ENCODE measurements at regions of chr17 and their contacts with region 1.

Region 1: GRCh38 chr17:40854159-40854814 is 12.7 kb downstream of the KRT12 start:
- DNase-seq: peak; percentile 71 to 84
- ATAC-seq: peak; percentile 84 to 92
- H3K4me3 ChIP-seq: no peak overlapping the region
- H3K27ac ChIP-seq: peak overlapping the region; percentile 42 to 68
- H3K4me1 ChIP-seq: peaks cover 71% of the 10 kb centered on the region
- CTCF ChIP-seq: no peak
- EP300 ChIP-seq: peak; percentile 80; a peak in 3 of 5 replicates
- POLR2A ChIP-seq: no peak
- RAD21 ChIP-seq: peak in 1 of 2 experiments; percentile 42; a peak in 1 of 5 replicates

Region 2: DNA sequence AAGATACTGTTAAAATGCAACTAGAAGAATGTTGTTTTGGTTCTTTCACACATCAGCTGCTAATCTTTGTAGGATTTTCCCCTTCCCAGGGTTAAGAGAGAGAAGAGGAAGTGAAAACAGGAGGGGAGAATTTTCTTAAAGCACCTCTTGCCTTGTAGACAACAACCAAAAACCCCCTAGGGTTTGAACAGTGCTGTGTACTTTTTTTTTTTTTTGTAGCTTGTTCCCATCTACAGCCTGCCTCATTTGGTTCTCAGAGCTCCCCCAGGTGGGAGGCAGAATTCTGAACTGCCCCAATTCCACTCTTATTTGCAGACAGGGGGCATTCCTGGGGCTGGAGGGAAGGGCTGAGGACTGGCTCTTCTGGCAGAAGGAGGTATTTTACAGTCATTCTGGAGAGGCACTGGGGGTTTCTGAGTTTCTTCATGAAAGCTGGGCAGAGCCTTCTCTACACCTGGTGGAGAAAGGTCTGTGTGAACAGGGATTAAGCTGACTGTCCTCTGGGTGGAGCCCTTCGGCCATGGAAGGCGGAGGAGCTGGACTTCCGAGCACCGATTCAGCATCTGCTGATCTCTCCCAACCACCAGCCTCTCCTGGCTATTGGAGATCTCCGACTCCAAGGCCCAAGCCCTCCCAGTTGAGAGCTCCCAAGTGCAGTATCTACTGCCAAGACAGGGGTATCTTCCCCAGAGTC is 238.8 kb before region 1 on chr17:
- CTCF ChIA-PET with region 1: interaction called, 20 read pairs
- POLR2A ChIA-PET with region 1: no interaction called
- DNase-seq: peak; percentile 84 to 91
- ATAC-seq: peak; percentile 84 to 93
- H3K4me3 ChIP-seq: no peak overlapping the region
- H3K27ac ChIP-seq: peak overlapping the region in 1 of 2 experiments; percentile 45; a peak in 2 of 6 replicates
- H3K4me1 ChIP-seq: peaks cover 12% of the 10 kb centered on the region
- CTCF ChIP-seq: peak; percentile 93
- EP300 ChIP-seq: no peak
- POLR2A ChIP-seq: no peak
- RAD21 ChIP-seq: peak; percentile 94 to 96

Region 3: DNA sequence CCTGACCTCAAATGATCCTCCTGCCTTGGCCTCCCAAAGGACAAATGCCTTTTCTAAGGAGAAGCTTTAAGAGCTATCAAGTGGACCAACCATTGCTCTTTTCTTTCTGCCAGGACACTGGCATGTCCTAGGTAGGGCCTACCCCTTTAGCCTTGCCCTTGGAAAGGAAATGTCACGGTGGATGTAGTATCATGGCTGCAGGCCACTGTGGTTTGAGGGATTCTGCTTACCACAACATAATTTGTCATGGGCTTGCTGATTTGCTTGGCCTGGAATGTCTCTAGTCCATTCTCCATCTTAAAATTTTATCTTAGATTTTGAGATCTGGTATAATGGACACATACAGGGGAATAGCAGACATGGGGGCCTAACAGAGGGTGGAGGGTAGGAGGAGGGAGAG is 24.7 kb after region 1 on chr17:
- CTCF ChIA-PET with region 1: interaction called, 35 read pairs
- POLR2A ChIA-PET with region 1: no interaction called
- DNase-seq: no peak
- ATAC-seq: no peak
- H3K4me3 ChIP-seq: no peak overlapping the region
- H3K27ac ChIP-seq: no peak overlapping the region
- H3K4me1 ChIP-seq: no peaks in the 10 kb centered on the region
- CTCF ChIP-seq: no peak
- EP300 ChIP-seq: no peak
- POLR2A ChIP-seq: no peak
- RAD21 ChIP-seq: no peak

Region 4: GRCh38 chr17:40903129-40904065 is 49.1 kb after region 1 on chr17:
- CTCF ChIA-PET with region 1: interaction called, 104 read pairs
- POLR2A ChIA-PET with region 1: interaction called, 7 read pairs
- DNase-seq: peak; percentile 94 to 96
- ATAC-seq: peak; percentile 86 to 91
- H3K4me3 ChIP-seq: peak overlapping the region; percentile 33
- H3K27ac ChIP-seq: peak overlapping the region; percentile 91 to 93
- H3K4me1 ChIP-seq: peaks cover 34% of the 10 kb centered on the region
- CTCF ChIP-seq: no peak
- EP300 ChIP-seq: peak; percentile 71 to 74; a peak in 4 of 5 replicates
- POLR2A ChIP-seq: no peak
- RAD21 ChIP-seq: peak; percentile 2 to 29; a peak in 1 of 5 replicates

Region 5: GRCh38 chr17:41322094-41322902 is 468.0 kb after region 1 on chr17:
- CTCF ChIA-PET with region 1: interaction called, 58 read pairs
- POLR2A ChIA-PET with region 1: no interaction called
- DNase-seq: peak; percentile 46 to 68
- ATAC-seq: peak; percentile 67 to 79; a peak in 5 of 6 replicates
- H3K4me3 ChIP-seq: no peak overlapping the region
- H3K27ac ChIP-seq: 0 out of 6 replicates have a peak overlapping the region, but pooled peaks of 1 of the 2 experiments have one; percentile 43
- H3K4me1 ChIP-seq: no peaks in the 10 kb centered on the region
- CTCF ChIP-seq: peak; percentile 89
- EP300 ChIP-seq: no peak
- POLR2A ChIP-seq: no peak
- RAD21 ChIP-seq: peak; percentile 78 to 79

Region 6: DNA sequence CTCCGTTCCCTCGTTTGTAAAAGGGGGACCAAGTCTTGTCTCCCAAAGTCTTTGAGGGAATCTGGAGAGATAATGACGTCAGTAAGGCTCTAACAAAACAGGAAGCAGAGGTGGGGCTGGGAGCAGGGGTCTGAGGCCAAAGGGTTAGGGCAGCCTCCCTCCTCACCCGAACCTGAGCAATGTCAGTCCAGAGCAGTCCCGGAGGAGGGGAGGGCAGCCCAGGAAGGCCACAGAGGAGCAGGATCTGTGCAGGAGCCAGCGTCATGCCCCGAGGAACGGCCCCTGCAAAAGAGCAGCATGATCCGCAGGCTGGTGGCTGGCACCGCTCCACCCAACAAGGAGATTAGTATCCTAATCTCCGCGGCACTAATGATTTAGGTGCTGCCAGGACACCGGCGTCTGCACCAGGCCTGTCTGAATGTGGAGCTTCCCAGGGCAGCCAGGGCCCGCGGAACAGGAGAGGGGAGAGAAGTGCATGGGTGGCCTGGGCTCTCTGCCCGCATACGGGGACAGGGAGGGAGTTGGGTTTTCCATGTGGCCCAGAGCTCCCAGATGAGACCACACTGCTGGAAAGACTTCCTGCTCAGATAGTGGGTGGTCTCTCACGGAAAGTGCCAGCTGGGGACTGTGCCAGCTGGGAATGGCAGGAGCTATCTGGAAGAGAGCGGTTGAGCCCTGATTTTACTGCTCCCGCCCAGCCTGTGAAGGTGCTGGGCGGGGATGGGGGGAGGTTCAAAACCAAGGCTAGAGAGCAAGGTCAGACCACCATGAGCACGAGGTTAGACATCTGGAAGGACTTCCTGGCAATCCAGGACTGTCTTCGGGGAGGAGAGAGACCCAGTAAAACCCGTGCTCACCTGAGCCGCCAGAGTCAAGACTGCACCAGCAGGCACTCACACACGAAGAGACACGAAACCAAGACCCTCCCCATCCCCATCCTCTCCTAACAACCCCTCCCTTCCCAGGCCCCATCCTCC is 781.1 kb after region 1 on chr17:
- CTCF ChIA-PET with region 1: interaction called, 11 read pairs
- POLR2A ChIA-PET with region 1: no interaction called
- DNase-seq: no peak
- ATAC-seq: peak; percentile 27 to 47; a peak in 3 of 6 replicates
- H3K4me3 ChIP-seq: no peak overlapping the region
- H3K27ac ChIP-seq: no peak overlapping the region
- H3K4me1 ChIP-seq: no peaks in the 10 kb centered on the region
- CTCF ChIP-seq: no peak
- EP300 ChIP-seq: no peak
- POLR2A ChIP-seq: no peak
- RAD21 ChIP-seq: no peak